H1 (cell line): ENCODE measurements at regions of chr6 and their contacts with region 1.

Region 1: DNA sequence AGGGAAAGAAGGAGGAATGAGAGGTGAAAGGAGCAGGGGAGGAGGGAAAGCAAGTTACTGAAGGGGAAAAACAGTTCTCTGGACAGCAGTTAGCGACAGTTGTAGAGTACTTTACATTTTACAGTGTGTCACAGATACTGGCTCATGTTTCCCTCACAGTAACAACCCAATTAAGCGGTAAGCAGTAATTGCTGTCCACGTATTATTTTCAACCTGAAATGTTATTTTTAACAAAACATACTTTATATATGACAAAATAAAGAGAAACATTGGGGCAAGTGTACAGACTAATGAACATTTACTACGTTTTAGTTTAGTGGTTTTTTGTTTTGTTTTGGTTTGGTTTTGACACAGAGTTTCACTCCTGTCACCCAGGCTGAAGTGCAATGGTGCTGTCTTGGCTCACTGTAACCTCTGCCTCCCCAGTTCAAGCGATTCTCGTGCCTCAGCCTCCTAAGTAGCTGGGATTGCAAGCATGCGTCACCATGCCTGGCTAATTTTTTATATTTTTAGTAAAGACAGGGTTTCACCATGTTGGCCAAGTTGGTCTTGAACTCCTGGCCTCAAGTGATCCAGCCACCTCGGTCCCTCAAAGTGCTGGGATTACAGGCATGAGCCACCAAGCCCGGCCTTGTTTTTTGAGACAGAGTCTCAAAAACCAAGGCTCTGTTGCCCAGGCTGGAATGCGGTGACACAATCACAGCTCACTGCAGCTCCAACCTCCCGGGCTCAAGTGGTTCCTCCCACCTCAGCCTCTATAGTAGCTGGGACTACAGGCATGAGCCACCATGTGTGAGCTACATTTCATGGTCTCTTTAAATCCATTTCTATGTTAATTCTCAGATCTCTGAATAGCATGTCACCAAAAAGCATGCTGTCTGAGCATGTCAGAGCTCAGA is 22.6 kb upstream of the BTN3A2 start:
- DNase-seq: no peak
- H3K4me3 ChIP-seq: peak overlapping the region; percentile 41 to 73 (median 72); a peak in 7 of 8 replicates
- H3K27ac ChIP-seq: no peak overlapping the region
- H3K4me1 ChIP-seq: peaks cover 0 to 3% (median under 1%) of the 10 kb centered on the region in 4 experiments; a peak in 2 of 7 replicates
- H3K27me3 ChIP-seq: no peaks in the 10 kb centered on the region
- CTCF ChIP-seq: no peak
- EP300 ChIP-seq: no peak
- POLR2A ChIP-seq: no peak
- RAD21 ChIP-seq: no peak

Region 2: GRCh38 chr6:26304797-26305640 is 37.3 kb before region 1 on chr6:
- CTCF ChIA-PET with region 1: no interaction called
- POLR2A ChIA-PET with region 1: no interaction called
- DNase-seq: peak in 1 of 2 experiments; percentile 83
- H3K4me3 ChIP-seq: peak overlapping the region; percentile 44 to 75 (median 68)
- H3K27ac ChIP-seq: no peak overlapping the region
- H3K4me1 ChIP-seq: peaks cover 0 to 3% (median 1%) of the 10 kb centered on the region in 4 experiments; a peak in 3 of 7 replicates
- H3K27me3 ChIP-seq: no peaks in the 10 kb centered on the region
- CTCF ChIP-seq: no peak
- EP300 ChIP-seq: no peak
- POLR2A ChIP-seq: no peak
- RAD21 ChIP-seq: no peak

Region 3: DNA sequence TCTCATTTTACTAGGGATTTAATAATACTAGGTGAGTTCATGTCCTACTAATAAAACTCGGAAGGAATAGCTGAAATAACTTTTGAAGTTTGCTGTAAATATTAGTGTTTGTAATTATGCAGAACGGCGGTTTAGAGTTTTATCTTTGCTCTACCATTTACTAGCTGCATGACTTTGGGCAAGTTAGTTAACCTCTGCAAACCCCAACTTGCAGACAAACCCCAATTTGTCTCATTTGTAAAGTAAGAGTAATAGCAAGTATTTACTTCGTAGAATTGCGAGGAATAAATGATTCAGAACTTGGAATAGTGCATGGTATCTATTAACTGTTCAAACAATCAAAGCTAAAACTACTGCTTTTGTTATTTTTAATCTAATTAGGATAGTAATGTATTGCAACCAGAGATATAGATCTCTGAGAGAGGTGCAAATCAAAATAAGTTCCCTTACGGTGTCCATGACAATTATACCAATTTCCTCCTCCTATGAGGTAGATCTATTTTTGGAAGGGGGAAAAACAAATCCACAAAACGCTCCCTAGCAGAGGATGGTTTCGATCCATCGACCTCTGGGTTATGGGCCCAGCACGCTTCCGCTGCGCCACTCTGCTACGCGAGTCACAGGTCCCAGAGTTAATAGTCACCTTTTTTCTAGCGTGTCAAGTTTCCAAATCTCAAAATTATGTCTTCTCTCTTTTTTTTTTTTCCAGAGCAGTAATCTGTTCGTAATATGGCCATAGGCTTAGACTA is 12.4 kb before region 1 on chr6:
- CTCF ChIA-PET with region 1: interaction called, 10 read pairs
- POLR2A ChIA-PET with region 1: interaction called, 4 read pairs
- DNase-seq: peak in 1 of 2 experiments; percentile 90
- H3K4me3 ChIP-seq: peak overlapping the region; percentile 72 to 91 (median 81); a peak in 7 of 8 replicates
- H3K27ac ChIP-seq: no peak overlapping the region
- H3K4me1 ChIP-seq: peaks cover 0 to 3% (median 0%) of the 10 kb centered on the region in 4 experiments; a peak in 2 of 7 replicates
- H3K27me3 ChIP-seq: peaks cover 0 to 10% (median 8%) of the 10 kb centered on the region in 4 experiments; a peak in 5 of 7 replicates
- CTCF ChIP-seq: no peak
- EP300 ChIP-seq: no peak
- POLR2A ChIP-seq: no peak
- RAD21 ChIP-seq: no peak

Region 4: GRCh38 chr6:26421259-26422144 is 79.1 kb after region 1 on chr6:
- CTCF ChIA-PET with region 1: interaction called, 15 read pairs
- POLR2A ChIA-PET with region 1: interaction called, 3 read pairs
- DNase-seq: peak; percentile 34 to 76
- H3K4me3 ChIP-seq: peak overlapping the region; percentile 71 to 89 (median 82)
- H3K27ac ChIP-seq: 0 out of 2 replicates have a peak overlapping the region, but pooled peaks have one; percentile 46
- H3K4me1 ChIP-seq: peaks cover 0 to 7% (median 1%) of the 10 kb centered on the region in 4 experiments; a peak in 2 of 7 replicates
- H3K27me3 ChIP-seq: no peaks in the 10 kb centered on the region
- CTCF ChIP-seq: no peak
- EP300 ChIP-seq: no peak
- POLR2A ChIP-seq: no peak
- RAD21 ChIP-seq: no peak

Region 5: DNA sequence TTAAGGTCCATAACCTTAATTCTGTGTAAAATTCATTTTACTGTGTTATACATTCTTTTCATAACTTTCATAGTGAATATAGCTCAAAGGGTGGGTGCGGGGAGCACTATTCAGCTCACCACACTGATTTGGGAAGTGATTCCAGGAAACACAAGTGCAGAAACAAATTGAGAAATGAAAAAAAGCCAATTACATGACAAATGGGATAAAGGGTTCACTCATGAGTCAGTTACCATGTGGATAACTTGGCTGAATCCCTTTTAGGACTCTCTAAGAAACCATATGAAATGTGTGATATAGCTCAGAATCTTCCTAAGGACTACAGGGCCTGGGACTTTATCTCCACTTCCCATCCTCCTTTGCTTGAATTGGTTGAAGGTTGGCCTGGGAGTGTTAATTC is 112.3 kb after region 1 on chr6:
- CTCF ChIA-PET with region 1: interaction called, 24 read pairs
- POLR2A ChIA-PET with region 1: interaction called, 6 read pairs
- DNase-seq: no peak
- H3K4me3 ChIP-seq: no peak overlapping the region
- H3K27ac ChIP-seq: no peak overlapping the region
- H3K4me1 ChIP-seq: peaks cover 0 to 6% (median 5%) of the 10 kb centered on the region in 4 experiments; a peak in 4 of 7 replicates
- H3K27me3 ChIP-seq: no peaks in the 10 kb centered on the region
- CTCF ChIP-seq: no peak
- EP300 ChIP-seq: no peak
- POLR2A ChIP-seq: no peak
- RAD21 ChIP-seq: no peak

Region 6: DNA sequence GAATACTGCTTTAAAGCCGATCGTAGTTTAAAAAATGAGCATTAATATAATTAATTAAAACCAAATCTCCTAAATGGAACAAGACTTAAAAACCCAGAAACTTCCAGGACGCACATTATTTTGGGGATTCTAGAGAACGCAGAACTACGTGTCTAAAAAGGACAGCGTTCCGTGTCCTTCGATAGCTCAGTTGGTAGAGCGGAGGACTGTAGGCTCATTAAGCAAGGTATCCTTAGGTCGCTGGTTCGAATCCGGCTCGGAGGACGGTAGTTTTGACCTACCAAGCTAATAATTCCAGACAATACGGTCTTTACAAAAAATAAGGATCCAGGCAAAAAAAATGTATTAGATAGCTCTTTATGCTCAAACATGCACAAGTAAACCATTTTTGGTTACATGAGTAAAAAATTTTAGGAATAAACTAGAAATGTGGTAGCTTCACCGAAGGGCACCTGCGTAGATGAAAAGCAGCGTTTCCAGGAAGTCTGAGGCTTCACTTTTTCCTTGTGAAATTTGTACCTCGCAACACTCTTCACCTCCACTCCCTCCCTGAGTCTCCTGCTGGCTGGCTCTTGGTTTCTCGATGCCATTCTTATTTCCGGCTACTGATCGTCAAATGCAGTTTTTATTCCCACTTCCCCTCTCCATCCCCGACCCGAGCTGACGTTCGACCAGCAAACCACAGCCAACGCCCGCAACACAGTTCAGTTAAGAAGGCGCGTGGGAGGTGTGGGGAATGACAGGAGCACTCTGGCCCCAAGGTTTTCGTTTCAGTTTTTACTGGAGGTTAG is 234.8 kb after region 1 on chr6:
- CTCF ChIA-PET with region 1: interaction called, 11 read pairs
- POLR2A ChIA-PET with region 1: interaction called, 3 read pairs
- DNase-seq: peak; percentile 88 to 90
- H3K4me3 ChIP-seq: peak overlapping the region; percentile 50 to 86 (median 72)
- H3K27ac ChIP-seq: no peak overlapping the region
- H3K4me1 ChIP-seq: no peaks in the 10 kb centered on the region
- H3K27me3 ChIP-seq: peaks cover 0 to 4% (median 0%) of the 10 kb centered on the region in 4 experiments; a peak in 2 of 7 replicates
- CTCF ChIP-seq: no peak
- EP300 ChIP-seq: no peak
- POLR2A ChIP-seq: no peak
- RAD21 ChIP-seq: no peak

Region 7: GRCh38 chr6:26596579-26597388 is 254.4 kb after region 1 on chr6 and contains the start of gene ABT1:
- CTCF ChIA-PET with region 1: interaction called, 18 read pairs
- POLR2A ChIA-PET with region 1: interaction called, 9 read pairs
- DNase-seq: peak; percentile 91 to 99
- H3K4me3 ChIP-seq: peak within 1 kb of the TSS; percentile 92 to 100 (median 99)
- H3K27ac ChIP-seq: peak within 1 kb of the TSS; percentile 72
- H3K4me1 ChIP-seq: peaks cover 0 to 5% (median 2%) of the 10 kb centered on the region in 4 experiments; a peak in 5 of 7 replicates
- H3K27me3 ChIP-seq: no peaks in the 10 kb centered on the region
- CTCF ChIP-seq: no peak
- EP300 ChIP-seq: no peak
- POLR2A ChIP-seq: peak; percentile 40 to 78
- RAD21 ChIP-seq: no peak
- total RNA-seq, gene ABT1: 20.5 and 20.6 TPM in 2 replicates

Region 8: GRCh38 chr6:26743157-26743821 is 400.9 kb after region 1 on chr6:
- CTCF ChIA-PET with region 1: no interaction called
- POLR2A ChIA-PET with region 1: no interaction called
- DNase-seq: peak in 1 of 2 experiments; percentile 80
- H3K4me3 ChIP-seq: peak overlapping the region; percentile 70 to 88 (median 84)
- H3K27ac ChIP-seq: no peak overlapping the region
- H3K4me1 ChIP-seq: no peaks in the 10 kb centered on the region
- H3K27me3 ChIP-seq: peaks cover 0 to 6% (median 5%) of the 10 kb centered on the region in 4 experiments; a peak in 5 of 7 replicates
- CTCF ChIP-seq: no peak
- EP300 ChIP-seq: no peak
- POLR2A ChIP-seq: no peak
- RAD21 ChIP-seq: no peak